ENCODE measurements at regions of chr3 and their contacts with region 1.

Region 1: DNA sequence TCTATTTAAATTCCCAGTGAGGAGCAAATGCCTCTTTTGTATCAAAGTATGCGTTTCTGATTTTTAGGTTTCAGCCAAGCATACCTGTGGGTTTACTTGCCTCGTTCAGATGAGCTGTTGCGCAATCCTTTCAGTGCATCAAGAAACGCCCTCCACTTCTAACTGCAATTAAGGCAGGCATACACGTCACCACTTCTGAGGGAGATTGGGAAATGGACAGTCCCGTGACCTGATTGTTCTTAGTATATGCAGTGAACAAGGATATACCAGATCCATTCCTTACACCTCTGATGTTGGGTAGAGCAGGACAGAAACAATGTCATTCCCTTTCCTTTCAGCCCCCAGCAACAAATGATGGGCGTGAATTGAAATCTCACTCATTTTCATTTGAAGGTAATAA is 219.0 kb downstream of the ITPR1 start:
- DNase-seq: no peak
- ATAC-seq: no peak
- H3K4me3 Mint-ChIP-seq: no peak overlapping the region
- H3K27ac Mint-ChIP-seq: no peak overlapping the region
- H3K4me1 Mint-ChIP-seq: peaks cover 31% of the 10 kb centered on the region
- H3K27me3 Mint-ChIP-seq: no peaks in the 10 kb centered on the region

Region 2: GRCh38 chr3:3902156-3902555 is 810.0 kb before region 1 on chr3:
- CTCF ChIA-PET with region 1: no interaction called
- POLR2A ChIA-PET with region 1: no interaction called
- DNase-seq: no peak
- ATAC-seq: no peak
- H3K4me3 Mint-ChIP-seq: no peak overlapping the region
- H3K27ac Mint-ChIP-seq: no peak overlapping the region
- H3K4me1 Mint-ChIP-seq: no peaks in the 10 kb centered on the region
- H3K27me3 Mint-ChIP-seq: no peaks in the 10 kb centered on the region

Region 3: GRCh38 chr3:4738737-4739274 is 26.7 kb after region 1 on chr3:
- CTCF ChIA-PET with region 1: interaction called, 14 read pairs
- POLR2A ChIA-PET with region 1: no interaction called
- DNase-seq: no peak
- ATAC-seq: no peak
- H3K4me3 Mint-ChIP-seq: peak overlapping the region; percentile 6
- H3K27ac Mint-ChIP-seq: peak overlapping the region; percentile 97
- H3K4me1 Mint-ChIP-seq: peaks cover 84% of the 10 kb centered on the region
- H3K27me3 Mint-ChIP-seq: no peaks in the 10 kb centered on the region

Region 4: DNA sequence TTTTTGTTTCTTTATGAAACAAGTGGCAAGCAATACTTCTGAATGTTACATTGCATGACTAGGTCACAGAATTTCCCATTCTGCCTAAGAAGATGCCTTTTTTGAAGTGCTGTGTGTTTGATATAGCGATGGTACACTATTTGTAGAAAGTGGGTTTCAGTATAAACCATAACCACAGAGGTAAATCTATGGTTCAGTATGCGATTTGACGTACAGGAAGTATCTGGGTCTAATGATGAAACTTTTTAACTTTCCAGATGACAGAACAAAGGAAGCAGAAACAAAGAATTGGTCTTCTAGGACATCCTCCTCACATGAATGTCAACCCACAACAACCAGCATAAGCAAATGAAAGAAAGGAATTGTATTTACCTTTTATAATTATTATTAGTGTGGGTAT is 133.7 kb after region 1 on chr3:
- CTCF ChIA-PET with region 1: interaction called, 13 read pairs
- POLR2A ChIA-PET with region 1: no interaction called
- DNase-seq: no peak
- ATAC-seq: peak; percentile 65
- H3K4me3 Mint-ChIP-seq: peak overlapping the region; percentile 36
- H3K27ac Mint-ChIP-seq: peak overlapping the region; percentile 87
- H3K4me1 Mint-ChIP-seq: peaks cover 97% of the 10 kb centered on the region
- H3K27me3 Mint-ChIP-seq: no peaks in the 10 kb centered on the region

Region 5: GRCh38 chr3:4978204-4978965 is 266.2 kb after region 1 on chr3:
- CTCF ChIA-PET with region 1: interaction called, 258 read pairs
- POLR2A ChIA-PET with region 1: interaction called, 56 read pairs
- DNase-seq: peak; percentile 95
- ATAC-seq: peak; percentile 59
- H3K4me3 Mint-ChIP-seq: peak overlapping the region; percentile 91
- H3K27ac Mint-ChIP-seq: peak overlapping the region; percentile 96
- H3K4me1 Mint-ChIP-seq: peaks cover 38% of the 10 kb centered on the region
- H3K27me3 Mint-ChIP-seq: no peaks in the 10 kb centered on the region

Region 6: GRCh38 chr3:5026331-5027218 is 314.4 kb after region 1 on chr3:
- CTCF ChIA-PET with region 1: interaction called, 32 read pairs
- POLR2A ChIA-PET with region 1: no interaction called
- DNase-seq: peak; percentile 68
- ATAC-seq: peak; percentile 77
- H3K4me3 Mint-ChIP-seq: peak overlapping the region; percentile 76
- H3K27ac Mint-ChIP-seq: peak overlapping the region; percentile 86
- H3K4me1 Mint-ChIP-seq: peaks cover 56% of the 10 kb centered on the region
- H3K27me3 Mint-ChIP-seq: no peaks in the 10 kb centered on the region

Region 7: GRCh38 chr3:5122030-5122740 is 410.0 kb after region 1 on chr3 and contains the start of gene ARL8B:
- CTCF ChIA-PET with region 1: interaction called, 15 read pairs
- POLR2A ChIA-PET with region 1: no interaction called
- DNase-seq: peak; percentile 93
- ATAC-seq: peak; percentile 97
- H3K4me3 Mint-ChIP-seq: peak within 1 kb of the TSS; percentile 95
- H3K27ac Mint-ChIP-seq: peak within 1 kb of the TSS; percentile 91
- H3K4me1 Mint-ChIP-seq: peaks cover 29% of the 10 kb centered on the region
- H3K27me3 Mint-ChIP-seq: no peaks in the 10 kb centered on the region
- total RNA-seq, gene ARL8B: 41.0 to 44.0 TPM